ENCODE measurements at regions of chr2 and their contacts with region 1.

Region 1: DNA sequence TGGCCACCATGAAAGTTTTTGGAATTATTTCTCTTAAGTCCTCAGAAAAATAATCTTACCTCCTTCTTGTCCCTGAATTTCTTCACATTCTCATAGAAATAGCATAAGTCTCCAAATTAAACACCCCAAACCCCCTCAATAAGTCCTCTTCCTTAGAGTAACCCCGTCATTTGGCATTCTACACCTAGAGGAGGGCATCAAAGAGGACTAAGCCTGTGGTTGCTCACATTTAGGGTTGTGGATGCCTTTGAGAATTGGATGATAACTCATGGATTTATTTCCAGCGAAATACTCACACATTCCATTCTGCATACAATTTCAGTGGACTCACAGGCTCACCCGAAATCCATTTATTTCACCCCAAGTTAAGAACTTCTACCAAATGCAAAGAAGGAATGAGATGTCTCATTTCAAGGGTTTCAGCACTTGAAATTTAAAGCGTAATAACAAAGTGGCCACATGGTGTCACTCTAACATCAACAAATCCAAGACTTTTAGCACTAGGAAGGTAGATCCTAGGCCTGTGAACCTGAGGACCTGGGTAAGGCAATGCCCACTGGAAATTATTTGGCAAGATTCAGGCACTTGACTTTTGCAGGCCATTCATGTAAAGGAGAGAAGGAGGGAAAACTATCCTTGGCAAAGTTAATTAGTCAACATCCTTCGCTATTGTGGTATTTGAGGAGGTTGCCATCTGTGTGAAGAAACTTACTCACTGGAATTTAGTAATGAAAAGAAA is 24.6 kb downstream of the DYTN start:
- DNase-seq: no peak
- ATAC-seq: peak; percentile 29 to 65
- H3K4me3 ChIP-seq: no peak overlapping the region
- H3K27ac ChIP-seq: no peak overlapping the region
- H3K4me1 ChIP-seq: no peaks in the 10 kb centered on the region
- H3K27me3 ChIP-seq: no peaks in the 10 kb centered on the region

Region 2: DNA sequence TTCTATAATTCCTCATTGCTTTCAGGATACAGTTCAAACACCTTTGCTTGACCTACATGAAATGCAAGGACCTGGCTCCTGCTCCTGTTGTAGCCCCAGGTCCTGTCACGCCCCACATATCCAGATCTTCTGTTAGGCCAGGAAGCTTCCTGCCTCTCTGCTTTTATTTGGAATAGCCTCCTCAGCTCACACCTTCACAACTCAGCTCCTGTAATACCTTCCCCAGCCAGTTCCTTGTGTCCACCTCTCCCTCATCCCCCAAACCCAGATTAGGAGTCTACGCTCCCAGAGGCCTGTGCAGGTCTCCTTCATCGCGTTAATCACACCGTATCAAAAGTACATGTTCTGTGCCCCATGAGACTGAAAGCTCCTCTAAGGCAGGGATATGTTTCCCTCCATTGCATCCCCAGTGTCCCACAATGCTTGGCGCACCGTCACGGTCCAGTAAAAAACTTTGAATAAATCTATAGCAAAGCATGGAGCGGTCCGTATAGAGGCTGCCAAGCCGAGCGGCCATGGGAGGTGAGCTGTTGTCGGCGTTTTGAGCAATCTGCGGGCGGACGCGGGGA is 71.2 kb after region 1 on chr2:
- intact Hi-C with region 1: loop called in 1 of 4 experiments (anchors 5 kb)
- DNase-seq: no peak
- ATAC-seq: no peak
- H3K4me3 ChIP-seq: peak overlapping the region; percentile 76
- H3K27ac ChIP-seq: peak overlapping the region; percentile 61
- H3K4me1 ChIP-seq: peaks cover 4% of the 10 kb centered on the region
- H3K27me3 ChIP-seq: no peaks in the 10 kb centered on the region

Region 3: GRCh38 chr2:206783718-206784117 is 90.2 kb after region 1 on chr2:
- intact Hi-C with region 1: loop called in 2 of 4 experiments (anchors 10 kb)
- DNase-seq: no peak
- ATAC-seq: no peak
- H3K4me3 ChIP-seq: no peak overlapping the region
- H3K27ac ChIP-seq: no peak overlapping the region
- H3K4me1 ChIP-seq: no peaks in the 10 kb centered on the region
- H3K27me3 ChIP-seq: no peaks in the 10 kb centered on the region

Region 4: GRCh38 chr2:207202645-207203044 is 509.1 kb after region 1 on chr2:
- intact Hi-C with region 1: loop called in 1 of 4 experiments (anchors 5 kb)
- DNase-seq: no peak
- ATAC-seq: no peak
- H3K4me3 ChIP-seq: no peak overlapping the region
- H3K27ac ChIP-seq: no peak overlapping the region
- H3K4me1 ChIP-seq: no peaks in the 10 kb centered on the region
- H3K27me3 ChIP-seq: no peaks in the 10 kb centered on the region

Region 5: GRCh38 chr2:207473049-207473930 is 779.7 kb after region 1 on chr2:
- intact Hi-C with region 1: loop called in 2 of 4 experiments (anchors 5 to 10 kb)
- DNase-seq: peak in 2 of 3 donors; percentile 33 to 50
- ATAC-seq: peak; percentile 83 to 89
- H3K4me3 ChIP-seq: no peak overlapping the region
- H3K27ac ChIP-seq: no peak overlapping the region
- H3K4me1 ChIP-seq: no peaks in the 10 kb centered on the region
- H3K27me3 ChIP-seq: no peaks in the 10 kb centered on the region